Activated naive CD4-positive, alpha-beta T cell treated with anti-CD3 and anti-CD28 coated beads, Interleukin-2, amount 10 ng/mL, durations not matched to agents 7 days and 5 days (primary cell): ENCODE measurements at regions of chr1 and their contacts with region 1.

Region 1: DNA sequence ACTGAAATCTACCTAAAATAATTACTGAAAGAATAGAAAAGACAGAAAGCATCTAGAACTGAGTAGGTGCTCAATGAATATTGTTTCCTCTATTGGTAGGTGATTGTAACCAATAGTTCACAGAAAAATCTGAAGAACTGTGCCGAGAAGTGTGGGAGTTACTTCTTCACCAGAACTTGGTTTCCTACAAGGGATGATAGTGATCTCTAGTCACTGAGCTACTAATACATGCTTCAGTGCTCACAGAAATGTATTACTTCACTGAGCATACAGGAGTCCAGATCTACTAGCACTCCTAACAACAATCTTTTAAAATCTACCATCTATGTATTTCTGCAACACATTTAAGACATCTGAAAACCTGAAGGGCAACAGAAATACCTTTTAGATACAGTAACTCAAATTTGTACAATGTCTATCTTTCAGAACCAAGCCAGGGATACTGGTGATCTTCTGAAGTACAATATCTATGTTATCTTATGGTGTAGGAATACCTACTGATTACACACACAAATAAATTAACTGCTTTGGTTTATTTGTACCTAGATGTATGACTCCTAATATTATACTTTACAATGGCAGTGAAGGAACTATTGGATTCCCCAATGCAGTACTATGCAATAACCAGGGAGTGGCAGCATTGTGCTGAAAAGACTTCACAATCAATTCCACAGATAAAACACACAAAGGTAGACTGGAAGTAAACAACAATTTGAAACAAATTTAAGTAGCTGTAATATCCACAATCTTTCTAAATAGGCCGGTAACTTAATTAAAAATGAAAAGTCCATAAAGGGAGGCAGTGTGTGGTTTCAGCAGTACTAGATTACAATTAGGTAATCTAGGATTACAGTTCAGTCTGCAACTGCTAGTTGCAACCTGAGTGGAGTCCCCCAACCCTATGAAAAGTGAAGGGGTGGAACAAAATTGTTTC is 243.0 kb downstream of the SLC45A1 start:
- DNase-seq: peak; percentile 44
- H3K4me3 Mint-ChIP-seq: no peak overlapping the region
- H3K27ac Mint-ChIP-seq: no peak overlapping the region
- H3K4me1 Mint-ChIP-seq: peaks cover 26% of the 10 kb centered on the region
- H3K27me3 Mint-ChIP-seq: no peaks in the 10 kb centered on the region

Region 2: DNA sequence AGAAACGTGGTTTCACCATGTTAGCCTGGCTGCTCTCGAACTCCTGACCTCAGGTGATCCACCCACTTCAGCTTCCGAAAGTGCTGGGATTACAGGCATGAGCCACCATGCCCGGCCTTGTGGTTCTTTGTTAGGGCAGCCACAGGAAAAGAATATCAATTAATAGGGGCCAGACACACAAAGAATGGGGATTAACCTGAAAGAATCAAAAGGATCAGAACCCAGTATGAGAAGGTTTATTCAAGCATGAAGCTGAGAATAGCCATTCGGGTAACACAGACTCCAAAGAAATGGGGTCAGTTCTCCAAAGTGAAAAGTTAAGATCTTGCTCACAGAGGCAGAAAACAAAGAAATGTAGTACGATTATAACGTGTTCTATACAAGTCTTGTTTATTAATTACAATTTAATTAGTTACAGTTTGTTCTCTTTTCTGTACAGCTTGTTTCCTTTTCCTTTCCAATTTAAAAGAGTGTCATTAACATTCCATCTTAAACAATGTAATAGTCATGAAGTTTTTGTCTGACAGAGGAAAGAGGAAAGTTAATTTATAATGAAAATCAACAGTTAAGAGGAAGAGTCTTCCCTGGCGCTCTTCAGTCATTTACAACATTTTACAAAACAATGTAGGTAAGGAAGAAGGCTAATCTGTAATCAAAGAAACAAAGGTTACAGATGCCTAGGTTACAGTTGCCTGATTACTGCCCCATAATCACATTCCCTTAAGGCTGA is 294.3 kb before region 1 on chr1:
- CTCF ChIA-PET with region 1: no interaction called
- DNase-seq: no peak
- H3K4me3 Mint-ChIP-seq: no peak overlapping the region
- H3K27ac Mint-ChIP-seq: no peak overlapping the region
- H3K4me1 Mint-ChIP-seq: no peaks in the 10 kb centered on the region
- H3K27me3 Mint-ChIP-seq: peaks cover 40% of the 10 kb centered on the region

Region 3: GRCh38 chr1:8302081-8302956 is 258.6 kb before region 1 on chr1:
- CTCF ChIA-PET with region 1: no interaction called
- DNase-seq: no peak
- H3K4me3 Mint-ChIP-seq: no peak overlapping the region
- H3K27ac Mint-ChIP-seq: no peak overlapping the region
- H3K4me1 Mint-ChIP-seq: no peaks in the 10 kb centered on the region
- H3K27me3 Mint-ChIP-seq: peaks cover 24% of the 10 kb centered on the region

Region 4: GRCh38 chr1:8571200-8571984 is 10.5 kb after region 1 on chr1:
- CTCF ChIA-PET with region 1: interaction called, 11 read pairs
- DNase-seq: no peak
- H3K4me3 Mint-ChIP-seq: no peak overlapping the region
- H3K27ac Mint-ChIP-seq: no peak overlapping the region
- H3K4me1 Mint-ChIP-seq: peaks cover 7% of the 10 kb centered on the region
- H3K27me3 Mint-ChIP-seq: no peaks in the 10 kb centered on the region

Region 5: DNA sequence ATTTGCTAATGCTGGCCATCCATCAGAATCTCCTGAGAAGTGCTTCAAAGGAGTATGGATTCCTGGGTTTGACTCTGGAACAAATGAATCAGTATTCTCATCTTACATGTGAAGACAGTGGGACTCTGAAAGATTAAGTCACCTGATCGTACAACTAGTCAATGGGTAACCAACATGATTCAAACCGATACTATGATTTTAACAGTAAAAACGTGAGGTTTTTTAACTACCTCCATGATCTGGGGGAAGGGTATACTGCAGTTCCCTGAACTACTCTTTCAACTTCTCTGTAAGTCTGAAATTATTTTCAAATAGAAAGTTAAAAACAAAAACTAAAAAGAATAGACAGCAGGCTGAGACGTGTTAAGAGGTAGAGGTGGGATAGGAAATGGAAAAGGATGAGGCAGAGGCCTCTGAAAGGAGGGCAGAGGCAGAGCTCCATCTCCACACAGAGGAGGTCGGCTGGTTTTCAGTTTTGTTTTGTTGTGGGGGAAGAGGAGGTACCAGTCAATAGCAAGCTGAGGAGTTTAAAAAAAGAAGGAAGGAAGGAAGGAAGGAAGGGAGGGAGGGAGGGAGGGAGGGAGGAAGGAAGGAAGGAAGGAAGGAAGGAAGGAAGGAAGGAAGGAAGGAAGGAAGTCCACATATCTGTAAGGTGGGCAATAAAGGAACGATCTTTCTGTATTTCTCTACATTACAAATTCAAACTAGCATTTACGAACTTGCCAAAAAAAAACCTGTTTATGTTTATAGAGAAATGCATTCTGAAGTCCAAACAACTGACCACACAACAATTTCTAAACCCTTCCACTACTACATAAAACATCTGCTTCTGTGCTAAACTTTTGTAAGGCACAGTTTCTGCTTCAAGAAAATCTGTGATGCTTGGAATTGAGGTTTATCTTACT is 43.4 kb after region 1 on chr1:
- CTCF ChIA-PET with region 1: interaction called, 13 read pairs
- DNase-seq: peak; percentile 65
- H3K4me3 Mint-ChIP-seq: peak overlapping the region; percentile 51
- H3K27ac Mint-ChIP-seq: peak overlapping the region; percentile 97
- H3K4me1 Mint-ChIP-seq: peaks cover 46% of the 10 kb centered on the region
- H3K27me3 Mint-ChIP-seq: no peaks in the 10 kb centered on the region

Region 6: GRCh38 chr1:8671306-8671917 is 110.5 kb after region 1 on chr1:
- CTCF ChIA-PET with region 1: interaction called, 102 read pairs
- DNase-seq: peak; percentile 32
- H3K4me3 Mint-ChIP-seq: no peak overlapping the region
- H3K27ac Mint-ChIP-seq: no peak overlapping the region
- H3K4me1 Mint-ChIP-seq: peaks cover 39% of the 10 kb centered on the region
- H3K27me3 Mint-ChIP-seq: no peaks in the 10 kb centered on the region

Region 7: DNA sequence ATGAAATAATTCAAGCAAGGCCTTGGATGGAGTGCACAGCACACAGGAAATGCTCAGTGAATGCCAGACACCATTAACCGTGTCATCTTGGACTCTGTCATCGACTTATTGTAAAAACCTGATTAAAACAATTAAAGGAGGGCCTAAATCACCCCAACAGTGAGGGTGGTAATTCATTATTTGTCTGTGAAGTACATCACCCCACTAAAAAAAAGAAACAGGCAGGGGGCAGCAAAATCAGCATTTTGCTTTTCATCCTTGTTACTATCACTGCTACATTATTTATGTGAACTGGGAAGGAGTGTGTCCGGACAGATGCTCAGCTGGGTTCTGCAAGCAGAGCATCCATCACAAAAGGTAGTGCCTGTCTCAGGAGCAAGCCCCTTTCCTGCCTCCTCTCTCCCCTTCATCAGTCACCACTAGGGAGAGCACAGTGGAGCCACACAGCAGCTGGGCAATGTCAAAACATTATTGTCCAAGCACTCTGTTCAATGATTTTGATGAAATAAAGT is 158.0 kb after region 1 on chr1:
- CTCF ChIA-PET with region 1: interaction called, 14 read pairs
- DNase-seq: no peak
- H3K4me3 Mint-ChIP-seq: no peak overlapping the region
- H3K27ac Mint-ChIP-seq: no peak overlapping the region
- H3K4me1 Mint-ChIP-seq: peaks cover 47% of the 10 kb centered on the region
- H3K27me3 Mint-ChIP-seq: no peaks in the 10 kb centered on the region